ENCODE measurements at regions of chr17 and their contacts with region 1.

Region 1: DNA sequence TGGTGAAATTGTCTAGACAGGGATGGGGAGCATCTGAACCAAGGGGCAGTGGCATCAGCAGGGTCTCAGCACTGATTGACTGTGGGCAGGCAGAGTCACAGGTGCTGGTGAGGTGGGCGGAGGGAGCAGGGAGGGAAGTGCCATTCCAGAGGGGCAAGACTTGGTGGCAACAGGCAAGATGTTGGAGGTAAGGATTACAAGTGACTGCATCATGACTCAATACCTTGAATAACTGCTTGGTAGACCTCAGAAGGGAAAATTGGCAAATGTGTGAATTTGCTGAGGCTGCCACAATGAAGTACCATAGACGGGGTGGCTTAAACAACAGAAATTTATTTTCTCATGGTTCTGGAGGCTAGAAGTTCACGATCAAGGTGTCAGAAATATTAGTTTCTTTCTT is 419.1 kb downstream of the HS3ST3B1 start:
- DNase-seq: no peak
- H3K4me3 ChIP-seq: no peak overlapping the region
- H3K27ac ChIP-seq: no peak overlapping the region
- H3K4me1 ChIP-seq: no peaks in the 10 kb centered on the region
- H3K27me3 ChIP-seq: no peaks in the 10 kb centered on the region
- CTCF ChIP-seq: no peak
- POLR2A ChIP-seq: no peak

Region 2: DNA sequence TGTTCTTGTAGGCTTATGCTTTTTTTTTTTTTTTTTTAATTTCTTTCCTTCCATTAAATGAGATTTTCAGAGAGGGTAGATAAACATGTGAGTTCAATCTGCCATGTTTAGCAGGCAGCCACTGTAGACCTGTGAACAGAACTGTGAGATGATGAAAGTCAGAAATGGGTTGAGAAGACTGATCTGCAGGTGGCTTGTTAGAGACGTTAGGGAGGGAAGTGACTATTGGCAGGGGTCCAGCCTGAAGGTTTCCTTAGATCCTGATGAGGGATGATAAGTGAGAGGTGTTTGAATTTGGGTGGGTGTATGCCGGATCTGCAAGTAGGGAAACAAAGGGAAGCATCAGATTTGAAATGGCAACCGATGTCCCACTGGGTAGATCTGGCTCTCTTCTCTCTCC is 261.2 kb before region 1 on chr17:
- intact Hi-C with region 1: loop called (anchors 5 kb)
- DNase-seq: no peak
- H3K4me3 ChIP-seq: no peak overlapping the region
- H3K27ac ChIP-seq: no peak overlapping the region
- H3K4me1 ChIP-seq: no peaks in the 10 kb centered on the region
- H3K27me3 ChIP-seq: no peaks in the 10 kb centered on the region
- CTCF ChIP-seq: no peak
- POLR2A ChIP-seq: no peak

Measured in breast epithelium (tissue), 4 donors.